ENCODE measurements at regions of chr5 and their contacts with region 1.

Region 1: DNA sequence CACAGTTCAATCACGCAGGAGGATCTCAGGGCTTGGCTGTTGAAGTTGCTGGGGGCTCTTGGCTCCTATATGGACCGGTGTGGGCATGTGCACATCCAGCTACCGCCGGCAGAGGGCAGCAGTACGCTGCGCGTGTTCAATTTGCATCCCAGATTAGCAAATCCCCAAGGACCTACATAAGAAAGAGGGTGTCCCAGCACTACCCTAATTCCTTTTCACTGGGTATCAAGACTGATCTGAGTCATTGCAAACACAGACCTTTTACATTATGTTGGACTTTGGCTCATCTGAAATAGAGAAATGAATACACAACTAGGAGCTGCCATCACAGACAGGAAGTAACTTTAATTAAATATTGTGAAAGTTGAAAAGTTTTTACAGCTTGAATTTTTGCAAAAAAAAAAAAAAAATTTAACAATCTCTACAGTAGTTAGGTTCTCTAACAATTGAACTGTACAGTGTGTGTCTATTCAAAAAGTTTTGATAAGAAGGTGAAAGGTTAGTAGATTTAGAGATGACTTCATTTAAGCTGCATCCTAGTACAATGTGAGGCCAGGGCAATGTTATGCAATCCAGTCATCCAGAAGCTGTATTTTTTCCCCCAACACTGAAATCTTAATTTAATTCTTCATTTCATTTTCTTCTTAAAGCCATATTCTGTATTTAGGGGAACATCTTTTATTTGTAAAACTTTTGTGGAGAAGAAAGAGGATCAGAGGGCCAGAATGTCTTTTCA is 404.0 kb downstream of the EBF1 start:
- DNase-seq: peak; percentile 70
- ATAC-seq: peak; percentile 82
- H3K4me3 Mint-ChIP-seq: no peak overlapping the region
- H3K27ac Mint-ChIP-seq: no peak overlapping the region
- H3K4me1 Mint-ChIP-seq: no peaks in the 10 kb centered on the region
- H3K27me3 Mint-ChIP-seq: peaks cover 15% of the 10 kb centered on the region

Region 2: GRCh38 chr5:158174918-158175851 is 520.6 kb before region 1 on chr5:
- CTCF ChIA-PET with region 1: interaction called, 10 read pairs
- DNase-seq: peak; percentile 51
- ATAC-seq: peak; percentile 47
- H3K4me3 Mint-ChIP-seq: no peak overlapping the region
- H3K27ac Mint-ChIP-seq: no peak overlapping the region
- H3K4me1 Mint-ChIP-seq: no peaks in the 10 kb centered on the region
- H3K27me3 Mint-ChIP-seq: no peaks in the 10 kb centered on the region

Region 3: GRCh38 chr5:158682631-158683030 is 13.1 kb before region 1 on chr5:
- CTCF ChIA-PET with region 1: interaction called, 12 read pairs
- DNase-seq: no peak
- ATAC-seq: no peak
- H3K4me3 Mint-ChIP-seq: no peak overlapping the region
- H3K27ac Mint-ChIP-seq: no peak overlapping the region
- H3K4me1 Mint-ChIP-seq: no peaks in the 10 kb centered on the region
- H3K27me3 Mint-ChIP-seq: peaks cover 6% of the 10 kb centered on the region

Region 4: DNA sequence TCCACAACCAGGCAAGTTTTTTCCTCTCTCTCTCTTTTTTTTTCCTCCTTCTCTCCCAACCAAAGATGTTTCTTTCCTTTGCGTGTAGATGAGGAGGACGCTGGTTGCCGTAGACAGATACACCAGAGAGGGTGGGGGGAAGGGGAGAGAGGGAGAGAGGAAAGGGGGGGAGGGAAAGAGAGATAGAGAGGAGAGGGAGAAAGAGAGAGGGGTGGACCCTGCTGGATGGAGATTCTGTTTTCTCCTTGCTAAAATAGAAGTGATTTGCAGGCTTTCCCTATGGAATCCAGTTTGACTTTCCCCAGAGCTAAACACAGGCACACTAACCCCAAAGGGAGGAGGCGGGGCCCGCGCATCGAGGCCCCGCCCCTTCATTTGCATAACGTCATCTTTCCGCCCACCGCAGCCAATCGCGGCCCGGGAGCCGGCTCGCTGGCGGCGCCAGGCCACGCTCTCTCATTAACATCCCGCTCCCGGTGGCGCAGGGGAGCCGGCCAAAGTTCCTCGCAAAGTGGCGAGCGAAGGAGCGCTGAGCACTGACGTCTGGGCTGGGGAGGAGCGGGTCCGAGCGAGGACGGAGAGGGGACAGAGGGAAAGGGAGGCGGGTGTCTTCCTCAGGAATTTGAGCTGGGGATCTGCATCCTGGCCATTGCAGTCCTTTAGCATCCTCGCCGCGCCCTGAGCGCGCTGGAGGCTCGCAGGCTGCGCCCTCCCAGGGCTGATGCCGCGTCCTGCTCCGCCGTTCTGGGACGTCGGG is 404.4 kb after region 1 on chr5:
- CTCF ChIA-PET with region 1: interaction called, 146 read pairs
- DNase-seq: peak; percentile 83
- ATAC-seq: peak; percentile 92
- H3K4me3 Mint-ChIP-seq: peak overlapping the region; percentile 77
- H3K27ac Mint-ChIP-seq: no peak overlapping the region
- H3K4me1 Mint-ChIP-seq: peaks cover 25% of the 10 kb centered on the region
- H3K27me3 Mint-ChIP-seq: peaks cover 93% of the 10 kb centered on the region

Region 5: DNA sequence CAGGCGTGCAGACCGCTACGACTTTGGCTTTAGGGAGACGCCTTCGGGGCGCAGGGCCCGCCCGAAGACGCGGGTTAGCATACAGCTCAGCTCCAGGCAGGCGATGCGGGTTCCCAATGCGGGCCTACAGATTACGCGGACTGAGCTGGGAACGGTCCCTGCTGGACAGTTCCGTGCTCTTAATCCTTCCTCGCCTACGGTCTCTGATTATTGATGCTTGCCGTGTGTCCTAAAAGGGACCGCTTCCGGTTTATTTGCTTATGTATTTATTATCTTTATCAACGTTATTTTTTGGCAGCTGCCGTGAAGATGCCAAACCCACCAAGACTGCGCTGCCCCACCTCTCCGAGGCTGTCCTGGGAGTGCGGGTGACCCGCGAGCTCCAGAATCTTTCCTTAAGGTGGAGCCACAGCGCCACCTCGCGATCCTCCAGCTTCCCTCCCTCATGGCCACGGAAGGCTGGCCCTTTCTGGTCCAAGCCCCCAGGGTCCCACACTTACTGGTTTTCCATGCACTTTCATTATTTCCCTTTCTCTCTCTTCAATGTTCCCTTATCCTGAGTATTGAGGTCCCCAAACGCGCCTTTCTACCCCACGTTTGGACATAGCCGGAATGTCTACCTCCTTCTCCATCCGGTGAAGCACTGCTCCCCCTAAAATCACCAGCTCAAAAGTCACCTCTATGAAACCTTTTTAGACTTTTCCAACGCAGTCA is 411.0 kb after region 1 on chr5:
- CTCF ChIA-PET with region 1: interaction called, 146 read pairs
- DNase-seq: peak; percentile 74
- ATAC-seq: peak; percentile 86
- H3K4me3 Mint-ChIP-seq: peak overlapping the region; percentile 47
- H3K27ac Mint-ChIP-seq: peak overlapping the region; percentile 53
- H3K4me1 Mint-ChIP-seq: peaks cover 14% of the 10 kb centered on the region
- H3K27me3 Mint-ChIP-seq: peaks cover 79% of the 10 kb centered on the region

Region 6: DNA sequence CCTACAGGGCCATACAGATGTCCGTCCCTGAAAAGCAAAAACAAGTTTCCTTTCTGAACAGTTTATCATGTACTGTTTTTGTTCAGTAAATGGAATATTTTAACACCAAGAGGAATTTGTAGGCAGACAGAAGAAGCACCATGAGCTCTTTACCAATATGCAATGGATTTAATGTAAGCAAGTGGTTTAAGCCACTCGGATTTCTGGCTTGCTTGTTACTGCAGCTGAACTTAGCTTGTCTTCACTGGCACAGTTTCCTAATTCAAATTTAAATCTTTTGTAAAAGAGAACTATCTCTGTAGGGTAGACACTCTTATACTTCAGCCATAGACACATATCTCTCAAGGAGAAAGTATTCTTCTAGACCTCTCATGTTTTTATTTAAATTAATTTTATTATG is 416.7 kb after region 1 on chr5:
- CTCF ChIA-PET with region 1: interaction called, 146 read pairs
- DNase-seq: no peak
- ATAC-seq: no peak
- H3K4me3 Mint-ChIP-seq: no peak overlapping the region
- H3K27ac Mint-ChIP-seq: no peak overlapping the region
- H3K4me1 Mint-ChIP-seq: no peaks in the 10 kb centered on the region
- H3K27me3 Mint-ChIP-seq: peaks cover 46% of the 10 kb centered on the region

Region 7: DNA sequence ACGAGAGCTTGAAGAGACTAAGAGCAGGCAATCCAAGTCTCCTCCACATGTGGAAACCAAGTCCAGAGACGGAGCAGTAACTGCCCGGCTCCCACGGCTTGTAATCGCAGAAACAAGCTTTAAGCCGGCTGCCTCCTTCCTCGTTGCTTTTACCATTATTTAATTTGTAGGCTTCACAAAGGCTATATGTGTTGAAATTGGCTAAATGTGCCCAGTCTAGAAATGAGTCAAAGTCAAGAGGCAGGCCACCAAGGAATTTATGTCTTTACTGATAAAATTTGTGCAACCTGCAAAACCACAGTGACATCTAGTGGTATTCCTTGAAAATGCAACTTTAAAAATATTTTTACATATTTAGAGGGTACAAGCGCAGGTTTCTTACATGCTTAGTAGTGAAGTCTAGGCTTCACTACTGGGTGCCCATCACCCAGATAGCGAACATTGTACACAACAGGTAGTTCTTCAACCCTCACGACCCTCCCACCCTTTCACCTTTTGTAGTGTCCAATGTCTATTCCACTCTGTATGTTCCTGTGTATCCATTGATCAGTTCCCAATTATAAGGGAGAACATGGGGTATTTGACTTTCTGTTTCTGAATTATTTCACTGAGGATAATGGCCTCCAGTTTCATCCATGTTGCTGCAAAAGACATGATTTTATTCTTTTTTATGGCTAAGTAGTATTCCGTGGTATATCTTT is 437.4 kb after region 1 on chr5:
- CTCF ChIA-PET with region 1: interaction called, 43 read pairs
- DNase-seq: no peak
- ATAC-seq: peak; percentile 42
- H3K4me3 Mint-ChIP-seq: no peak overlapping the region
- H3K27ac Mint-ChIP-seq: no peak overlapping the region
- H3K4me1 Mint-ChIP-seq: no peaks in the 10 kb centered on the region
- H3K27me3 Mint-ChIP-seq: peaks cover 24% of the 10 kb centered on the region